B cell (primary cell): ENCODE measurements at regions of chr19 and their contacts with region 1.

Region 1: DNA sequence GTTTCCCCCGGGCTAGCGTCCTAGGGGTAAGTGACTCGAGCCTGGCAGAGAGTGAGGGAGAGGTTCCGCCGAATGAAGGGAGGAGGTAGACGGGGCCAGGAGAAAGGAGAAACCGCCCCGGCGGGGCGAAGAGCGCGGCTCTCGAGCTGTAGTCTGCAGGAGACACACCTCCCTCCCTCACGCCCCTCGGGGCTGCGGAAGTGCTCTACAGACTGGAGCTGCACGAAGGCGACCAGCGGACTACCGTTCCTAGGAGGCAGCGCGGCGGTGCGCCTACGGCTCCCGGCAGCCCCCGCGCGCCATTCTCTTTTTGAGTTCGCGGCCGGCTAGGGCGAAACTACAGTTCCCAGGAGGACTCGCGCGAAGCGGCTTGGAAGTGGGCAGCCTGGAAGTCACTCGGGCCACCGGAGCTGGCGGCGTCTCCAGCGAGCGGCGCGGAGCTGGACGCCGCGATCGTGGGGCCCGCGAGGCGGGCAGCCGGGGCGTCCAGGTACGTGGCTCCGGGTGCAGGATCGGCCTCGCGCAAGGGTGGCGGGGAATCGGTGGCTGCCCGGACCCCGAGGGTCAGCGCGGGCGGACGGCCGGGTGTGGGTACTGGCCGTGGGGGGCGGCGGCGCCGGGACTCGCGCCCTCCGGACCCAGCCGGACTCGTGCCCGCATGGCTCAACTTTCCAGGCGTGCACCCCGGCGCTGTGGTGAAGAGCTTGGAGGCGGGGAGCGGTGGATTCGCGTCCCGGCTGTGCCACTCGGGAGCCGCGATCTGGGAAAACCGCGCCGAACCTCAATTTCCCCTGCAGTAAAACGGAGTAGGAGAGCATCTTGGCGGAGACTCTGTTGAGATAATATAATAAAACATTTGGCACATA is at the start of gene SIPA1L3:
- DNase-seq: peak; percentile 96
- ATAC-seq: peak; percentile 93
- H3K4me3 ChIP-seq: peak within 1 kb of the TSS; percentile 68 to 99 (median 94)
- H3K4me3 Mint-ChIP-seq: peak within 1 kb of the TSS; percentile 91
- H3K27ac ChIP-seq: peak within 1 kb of the TSS; percentile 64 to 84
- H3K27ac Mint-ChIP-seq: peak within 1 kb of the TSS; percentile 96
- H3K4me1 ChIP-seq: peaks cover 55 to 63% of the 10 kb centered on the region in 2 donors
- H3K4me1 Mint-ChIP-seq: peaks cover 58% of the 10 kb centered on the region
- H3K27me3 ChIP-seq: no peaks in the 10 kb centered on the region
- H3K27me3 Mint-ChIP-seq: no peaks in the 10 kb centered on the region
- CTCF ChIP-seq: no peak
- total RNA-seq, gene SIPA1L3: 290 and 295 TPM in 2 replicates

Region 2: DNA sequence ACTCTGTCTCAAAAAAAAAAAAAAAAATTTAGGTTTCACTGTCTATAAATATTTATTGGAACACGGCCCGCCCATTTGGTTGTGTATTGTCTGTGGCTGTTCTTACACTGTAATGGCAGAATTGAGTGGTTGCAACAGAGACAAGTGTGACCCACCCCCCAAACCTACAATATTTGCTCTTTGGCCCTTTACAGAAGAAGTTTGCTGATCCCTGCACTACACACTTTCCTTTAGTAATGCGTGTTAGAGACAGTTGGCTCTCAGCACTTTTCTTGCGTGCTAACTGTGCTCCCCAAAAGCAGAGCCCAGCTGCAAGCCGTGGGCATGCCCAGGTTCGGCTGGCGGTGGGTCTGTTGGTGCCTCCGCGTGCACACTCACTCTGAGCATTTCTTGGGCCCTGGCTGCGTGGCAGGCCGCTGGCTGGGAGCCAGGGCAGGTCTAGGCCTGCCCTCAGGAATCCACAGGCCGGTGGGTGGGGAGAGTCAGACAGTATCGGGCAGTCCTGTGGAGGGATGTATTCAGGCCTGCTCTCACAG is 72.5 kb after region 1 on chr19:
- CTCF ChIA-PET with region 1: interaction called, 47 read pairs
- POLR2A ChIA-PET with region 1: interaction called, 26 read pairs
- intact Hi-C with region 1: loop called (anchors 2 kb)
- DNase-seq: peak; percentile 66
- ATAC-seq: no peak
- H3K4me3 ChIP-seq: peak overlapping the region in 2 of 5 experiments; percentile 19 to 45
- H3K4me3 Mint-ChIP-seq: peak overlapping the region; percentile 65
- H3K27ac ChIP-seq: peak overlapping the region; percentile 89 to 92
- H3K27ac Mint-ChIP-seq: peak overlapping the region; percentile 94
- H3K4me1 ChIP-seq: peaks cover 79 to 99% of the 10 kb centered on the region in 2 donors
- H3K4me1 Mint-ChIP-seq: peaks cover 87% of the 10 kb centered on the region
- H3K27me3 ChIP-seq: no peaks in the 10 kb centered on the region
- H3K27me3 Mint-ChIP-seq: no peaks in the 10 kb centered on the region
- CTCF ChIP-seq: no peak

Region 3: GRCh38 chr19:38033658-38034498 is 126.8 kb after region 1 on chr19:
- CTCF ChIA-PET with region 1: interaction called, 92 read pairs
- POLR2A ChIA-PET with region 1: interaction called, 10 read pairs
- intact Hi-C with region 1: loop called (anchors 1 kb)
- DNase-seq: peak; percentile 93
- ATAC-seq: peak; percentile 79
- H3K4me3 ChIP-seq: peak overlapping the region in 3 of 5 experiments; percentile 16 to 43 (median 36)
- H3K4me3 Mint-ChIP-seq: peak overlapping the region; percentile 86
- H3K27ac ChIP-seq: peak overlapping the region; percentile 84 to 93
- H3K27ac Mint-ChIP-seq: peak overlapping the region; percentile 99
- H3K4me1 ChIP-seq: peaks cover 63 to 87% of the 10 kb centered on the region in 2 donors
- H3K4me1 Mint-ChIP-seq: peaks cover 81% of the 10 kb centered on the region
- H3K27me3 ChIP-seq: no peaks in the 10 kb centered on the region
- H3K27me3 Mint-ChIP-seq: no peaks in the 10 kb centered on the region
- CTCF ChIP-seq: peak; percentile 65

Region 4: DNA sequence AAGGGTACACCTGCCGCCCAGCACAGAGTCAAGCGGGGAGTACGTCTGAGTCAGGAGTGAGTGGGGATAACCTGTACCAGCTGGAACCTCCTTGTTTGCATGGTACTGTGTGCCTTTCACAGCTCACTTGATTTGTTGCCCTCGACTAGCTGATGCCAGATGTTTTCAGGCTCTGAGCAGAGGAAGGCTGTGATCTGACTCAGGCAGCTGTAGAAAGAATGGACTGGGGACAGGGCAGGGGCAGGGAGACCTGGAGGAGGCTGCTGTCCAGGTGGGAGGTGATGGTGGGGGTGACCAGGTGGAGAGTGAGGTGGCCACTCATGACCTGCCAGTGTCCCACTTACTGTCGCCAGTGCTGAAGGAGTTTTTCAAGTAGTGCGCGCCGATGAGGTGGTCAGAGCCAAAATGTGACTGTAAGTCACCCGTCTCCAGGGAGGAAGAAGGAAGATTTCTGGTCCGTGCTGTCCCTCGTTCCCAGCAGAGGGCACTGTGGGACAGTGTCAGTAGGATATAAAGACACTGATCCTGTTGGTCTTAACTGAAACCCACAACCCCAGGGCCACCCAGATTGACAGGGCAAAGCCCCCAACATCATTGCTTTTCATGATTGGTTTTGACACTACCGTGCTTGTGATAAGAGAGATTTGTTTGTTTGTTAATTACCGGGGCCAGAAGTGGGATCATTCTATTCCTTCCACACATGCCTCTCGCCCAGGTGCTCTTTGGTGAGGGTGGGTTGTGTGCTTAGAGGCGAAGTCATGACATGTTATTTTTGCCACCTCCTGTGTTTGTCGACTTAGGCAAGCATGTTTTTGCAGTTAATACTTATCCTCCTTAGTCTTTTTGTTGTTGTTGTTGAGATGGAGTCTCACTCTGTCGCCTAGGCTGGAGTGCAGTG is 188.6 kb after region 1 on chr19:
- CTCF ChIA-PET with region 1: interaction called, 175 read pairs
- POLR2A ChIA-PET with region 1: interaction called, 5 read pairs
- intact Hi-C with region 1: loop called (anchors 1 kb)
- DNase-seq: peak; percentile 78
- ATAC-seq: peak; percentile 81
- H3K4me3 ChIP-seq: no peak overlapping the region
- H3K4me3 Mint-ChIP-seq: peak overlapping the region; percentile 11
- H3K27ac ChIP-seq: peak overlapping the region; percentile 18 to 69
- H3K27ac Mint-ChIP-seq: peak overlapping the region; percentile 90
- H3K4me1 ChIP-seq: peaks cover 7 to 12% of the 10 kb centered on the region in 2 donors
- H3K4me1 Mint-ChIP-seq: peaks cover 21% of the 10 kb centered on the region
- H3K27me3 ChIP-seq: no peaks in the 10 kb centered on the region
- H3K27me3 Mint-ChIP-seq: no peaks in the 10 kb centered on the region
- CTCF ChIP-seq: peak; percentile 73

Region 5: DNA sequence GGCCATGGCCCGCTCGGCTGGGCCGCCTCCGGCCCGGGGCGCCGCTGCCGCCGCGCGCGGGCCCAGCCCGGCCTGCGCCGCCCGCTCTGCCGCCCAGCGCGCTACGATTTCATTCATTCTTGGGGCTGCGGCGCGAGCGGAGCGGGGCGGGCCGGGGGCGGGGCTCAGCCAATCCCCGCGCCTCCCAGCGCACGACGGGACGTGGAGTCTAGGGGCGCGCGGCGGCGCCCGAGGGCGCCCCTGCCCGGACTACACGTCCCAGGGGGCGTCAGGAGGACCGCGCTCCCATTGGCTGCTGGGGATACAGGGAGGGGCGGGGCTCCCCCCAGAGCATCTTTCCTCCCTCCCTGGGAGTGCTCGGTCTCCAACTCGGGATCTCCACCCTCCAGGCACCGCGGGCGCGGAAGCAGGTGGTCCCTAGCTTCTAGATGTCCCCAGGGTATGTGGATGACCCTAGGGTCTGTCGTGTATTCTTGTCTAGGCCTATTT is 322.5 kb after region 1 on chr19:
- CTCF ChIA-PET with region 1: interaction called, 24 read pairs
- POLR2A ChIA-PET with region 1: interaction called, 6 read pairs
- intact Hi-C with region 1: loop called (anchors 10 kb)
- DNase-seq: peak; percentile 79
- ATAC-seq: peak; percentile 90
- H3K4me3 ChIP-seq: no peak overlapping the region
- H3K4me3 Mint-ChIP-seq: peak overlapping the region; percentile 64
- H3K27ac ChIP-seq: no peak overlapping the region
- H3K27ac Mint-ChIP-seq: peak overlapping the region; percentile 56
- H3K4me1 ChIP-seq: peaks cover 23% of the 10 kb centered on the region in 2 donors
- H3K4me1 Mint-ChIP-seq: peaks cover 22% of the 10 kb centered on the region
- H3K27me3 ChIP-seq: peaks cover 0 to 83% (median 33%) of the 10 kb centered on the region in 4 experiments
- H3K27me3 Mint-ChIP-seq: peaks cover 37% of the 10 kb centered on the region
- CTCF ChIP-seq: no peak

Region 6: DNA sequence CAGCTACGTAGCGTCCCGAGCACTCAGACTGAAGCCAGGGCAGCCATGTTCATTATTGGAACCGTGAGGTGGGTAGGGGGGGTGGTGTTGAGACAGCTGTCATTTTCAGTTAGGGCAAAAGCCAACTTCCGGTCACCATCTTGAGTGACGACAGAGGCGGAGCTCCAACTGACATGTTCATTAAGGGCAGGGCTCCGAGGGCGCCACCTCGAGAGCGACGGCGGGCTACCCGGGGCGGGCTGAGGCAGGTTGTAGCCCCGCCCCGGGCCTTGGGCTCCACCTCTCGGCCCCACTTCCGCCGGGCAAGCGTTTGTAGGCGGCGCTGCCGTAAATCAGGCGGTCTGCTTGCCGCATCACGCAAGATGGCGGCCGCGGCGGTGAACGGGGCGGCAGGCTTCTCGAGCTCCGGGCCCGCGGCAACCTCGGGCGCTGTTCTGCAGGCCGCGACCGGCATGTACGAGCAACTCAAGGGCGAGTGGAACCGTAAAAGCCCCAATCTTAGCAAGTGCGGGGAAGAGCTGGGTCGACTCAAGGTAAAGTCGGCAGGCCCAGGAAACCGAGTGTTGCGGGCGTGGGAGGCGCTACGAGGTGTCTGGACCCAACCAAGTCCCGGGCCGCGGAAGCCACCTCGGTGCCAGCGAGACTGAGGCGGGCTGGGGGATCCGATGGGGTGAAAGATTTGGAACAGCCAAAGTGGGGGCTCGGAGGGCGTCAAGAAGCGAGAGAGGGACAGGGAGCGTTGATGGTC is 467.5 kb after region 1 on chr19 and contains the start of gene PSMD8:
- CTCF ChIA-PET with region 1: interaction called, 9 read pairs
- POLR2A ChIA-PET with region 1: no interaction called
- intact Hi-C with region 1: loop called (anchors 1 kb)
- DNase-seq: peak; percentile 100
- ATAC-seq: peak; percentile 97
- H3K4me3 ChIP-seq: peak within 1 kb of the TSS; percentile 69 to 92 (median 80)
- H3K4me3 Mint-ChIP-seq: peak within 1 kb of the TSS; percentile 93
- H3K27ac ChIP-seq: peak within 1 kb of the TSS; percentile 88 to 90
- H3K27ac Mint-ChIP-seq: peak within 1 kb of the TSS; percentile 96
- H3K4me1 ChIP-seq: peaks cover 17 to 26% of the 10 kb centered on the region in 2 donors
- H3K4me1 Mint-ChIP-seq: peaks cover 26% of the 10 kb centered on the region
- H3K27me3 ChIP-seq: peaks cover 0 to 12% (median 0%) of the 10 kb centered on the region in 4 experiments
- H3K27me3 Mint-ChIP-seq: peaks cover 6% of the 10 kb centered on the region
- CTCF ChIP-seq: peak; percentile 18
- total RNA-seq, gene PSMD8: 77.1 and 88.1 TPM in 2 replicates